ENCODE measurements at regions of chr2 and their contacts with region 1.

Region 1: DNA sequence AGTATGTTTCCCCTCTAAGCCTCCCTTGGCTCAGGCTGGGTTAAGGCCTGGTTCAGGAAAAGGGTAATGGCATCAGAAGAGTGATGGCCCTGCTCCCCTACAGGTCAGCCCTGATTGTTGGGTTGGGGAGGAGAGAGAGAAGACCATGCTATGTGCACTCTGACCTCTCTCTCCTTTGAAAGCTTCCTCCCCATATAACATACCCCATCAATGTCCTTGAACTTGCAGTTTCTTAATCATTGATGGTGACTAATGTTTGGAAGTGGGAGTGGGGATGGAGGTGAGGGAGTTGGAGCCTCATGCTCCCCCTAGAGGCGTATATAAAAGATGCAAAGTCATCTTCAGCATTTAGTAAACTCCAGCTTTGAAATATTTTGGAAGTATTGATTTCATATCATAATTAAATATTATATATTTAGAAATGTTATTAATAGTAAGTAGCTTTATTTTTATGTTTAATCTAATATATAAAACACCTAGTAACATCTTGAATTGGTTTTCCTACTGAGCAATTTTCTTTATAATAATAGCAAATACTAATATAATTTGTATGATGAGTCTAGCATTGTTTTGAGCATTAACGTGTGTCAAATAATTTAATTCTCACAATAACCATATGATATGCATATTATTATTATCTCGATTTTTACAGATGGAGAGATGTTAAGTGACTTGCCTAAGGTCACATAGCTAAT is 8.8 kb downstream of the PLCL1 start:
- DNase-seq: no peak
- ATAC-seq: peak in 1 of 4 donors; percentile 23
- H3K4me3 ChIP-seq: no peak overlapping the region
- H3K27ac ChIP-seq: no peak overlapping the region
- H3K4me1 ChIP-seq: peaks cover 0 to 26% (median 1%) of the 10 kb centered on the region in 12 donors
- H3K27me3 ChIP-seq: no peaks in the 10 kb centered on the region
- CTCF ChIP-seq: peak; percentile 31 to 60 (median 44)
- POLR2A ChIP-seq: no peak

Region 2: DNA sequence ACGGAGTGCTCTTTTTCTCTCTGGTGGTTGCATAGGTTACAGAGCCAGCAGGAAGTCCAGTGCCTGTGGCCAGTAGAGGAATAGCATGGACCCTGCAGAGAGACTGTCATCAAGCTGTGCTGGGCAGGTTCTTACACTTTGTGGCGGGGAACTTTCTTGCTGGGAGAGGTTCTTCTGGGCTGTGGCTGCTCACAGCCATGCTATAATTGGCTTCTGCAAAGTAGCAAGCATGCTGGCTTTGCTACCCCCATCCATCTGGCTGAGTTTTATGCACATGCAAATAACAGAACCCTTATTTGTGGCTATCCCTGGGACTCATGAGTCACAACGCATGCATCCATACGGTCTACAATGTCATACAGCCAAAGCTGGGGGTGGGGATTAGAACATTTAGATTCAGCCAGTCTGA is 60.1 kb after region 1 on chr2:
- intact Hi-C with region 1: loop called in 2 of 10 experiments (anchors 5 to 10 kb)
- DNase-seq: peak in 3 of 5 donors; percentile 16 to 35 (median 27)
- ATAC-seq: peak; percentile 35 to 83 (median 72)
- H3K4me3 ChIP-seq: no peak overlapping the region
- H3K27ac ChIP-seq: peak overlapping the region in 6 of 12 donors; percentile 8 to 33 (median 29)
- H3K4me1 ChIP-seq: peaks cover 0 to 81% (median 40%) of the 10 kb centered on the region in 12 donors
- H3K27me3 ChIP-seq: no peaks in the 10 kb centered on the region
- CTCF ChIP-seq: peak in 1 of 12 donors; percentile 14
- POLR2A ChIP-seq: no peak

Region 3: GRCh38 chr2:197972061-197972460 is 158.8 kb after region 1 on chr2:
- intact Hi-C with region 1: loop called in 2 of 10 experiments (anchors 5 to 10 kb)
- DNase-seq: peak in 2 of 5 donors; percentile 32 to 43
- ATAC-seq: peak in 1 of 4 donors; percentile 38
- H3K4me3 ChIP-seq: no peak overlapping the region
- H3K27ac ChIP-seq: peak overlapping the region in 3 of 12 donors; percentile 12 to 42 (median 39)
- H3K4me1 ChIP-seq: peaks cover 0 to 55% (median 22%) of the 10 kb centered on the region in 12 donors
- H3K27me3 ChIP-seq: no peaks in the 10 kb centered on the region
- CTCF ChIP-seq: no peak
- POLR2A ChIP-seq: no peak

Measured in heart left ventricle (tissue), 16 donors.